ENCODE measurements at regions of chr20 and their contacts with region 1.

Region 1: DNA sequence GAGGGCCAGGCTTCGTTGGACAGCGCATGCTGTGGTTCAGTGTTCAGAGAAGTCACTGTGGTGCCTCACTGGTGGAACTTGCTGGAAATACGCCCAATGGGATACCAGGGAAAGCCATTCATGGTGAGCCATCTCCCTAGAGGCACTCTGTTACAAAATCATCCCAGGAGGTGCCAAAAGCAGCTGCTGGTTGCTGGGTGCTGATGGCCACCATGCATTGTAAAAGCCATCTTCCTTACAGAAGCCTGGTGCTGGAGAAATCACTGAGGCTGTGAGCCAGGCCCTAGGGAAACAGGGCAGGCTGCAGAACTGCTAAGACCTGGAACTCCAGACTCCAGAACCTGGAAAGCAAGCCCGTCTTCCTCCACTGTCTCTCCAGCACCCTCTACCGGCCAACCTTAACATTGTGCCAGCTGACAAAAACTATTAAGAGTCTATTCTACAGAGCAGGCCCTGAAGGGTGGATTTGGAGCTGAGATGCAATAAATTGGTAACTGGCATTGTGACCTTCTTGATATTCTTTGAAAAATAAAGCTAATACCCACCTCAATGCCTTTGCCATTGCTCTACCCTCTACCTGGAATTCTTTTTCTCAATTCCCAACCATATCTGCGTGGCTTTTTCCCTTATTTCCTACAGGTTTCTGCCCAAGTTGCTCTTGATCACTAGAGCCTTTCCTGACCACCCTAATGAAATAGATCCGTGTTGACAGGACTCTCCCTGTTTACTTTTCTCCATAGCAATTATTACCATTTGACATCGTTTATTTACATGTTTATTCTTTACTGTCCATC is 18.5 kb downstream of the SNRPB start:
- DNase-seq: peak; percentile 85
- ATAC-seq: peak; percentile 58
- H3K4me3 Mint-ChIP-seq: no peak overlapping the region
- H3K27ac Mint-ChIP-seq: no peak overlapping the region
- H3K4me1 Mint-ChIP-seq: peaks cover 45% of the 10 kb centered on the region
- H3K27me3 Mint-ChIP-seq: no peaks in the 10 kb centered on the region

Region 2: GRCh38 chr20:1965520-1966351 is 486.4 kb before region 1 on chr20:
- CTCF ChIA-PET with region 1: no interaction called
- POLR2A ChIA-PET with region 1: no interaction called
- intact Hi-C with region 1: loop called (anchors 1 to 5 kb)
- DNase-seq: peak; percentile 93
- ATAC-seq: peak; percentile 93
- H3K4me3 Mint-ChIP-seq: peak overlapping the region; percentile 34
- H3K27ac Mint-ChIP-seq: no peak overlapping the region
- H3K4me1 Mint-ChIP-seq: peaks cover 11% of the 10 kb centered on the region
- H3K27me3 Mint-ChIP-seq: peaks cover 20% of the 10 kb centered on the region

Region 3: GRCh38 chr20:2140561-2140960 is 311.6 kb before region 1 on chr20:
- CTCF ChIA-PET with region 1: no interaction called
- POLR2A ChIA-PET with region 1: no interaction called
- intact Hi-C with region 1: no loop called
- DNase-seq: no peak
- ATAC-seq: no peak
- H3K4me3 Mint-ChIP-seq: no peak overlapping the region
- H3K27ac Mint-ChIP-seq: no peak overlapping the region
- H3K4me1 Mint-ChIP-seq: peaks cover 4% of the 10 kb centered on the region
- H3K27me3 Mint-ChIP-seq: no peaks in the 10 kb centered on the region

Region 4: DNA sequence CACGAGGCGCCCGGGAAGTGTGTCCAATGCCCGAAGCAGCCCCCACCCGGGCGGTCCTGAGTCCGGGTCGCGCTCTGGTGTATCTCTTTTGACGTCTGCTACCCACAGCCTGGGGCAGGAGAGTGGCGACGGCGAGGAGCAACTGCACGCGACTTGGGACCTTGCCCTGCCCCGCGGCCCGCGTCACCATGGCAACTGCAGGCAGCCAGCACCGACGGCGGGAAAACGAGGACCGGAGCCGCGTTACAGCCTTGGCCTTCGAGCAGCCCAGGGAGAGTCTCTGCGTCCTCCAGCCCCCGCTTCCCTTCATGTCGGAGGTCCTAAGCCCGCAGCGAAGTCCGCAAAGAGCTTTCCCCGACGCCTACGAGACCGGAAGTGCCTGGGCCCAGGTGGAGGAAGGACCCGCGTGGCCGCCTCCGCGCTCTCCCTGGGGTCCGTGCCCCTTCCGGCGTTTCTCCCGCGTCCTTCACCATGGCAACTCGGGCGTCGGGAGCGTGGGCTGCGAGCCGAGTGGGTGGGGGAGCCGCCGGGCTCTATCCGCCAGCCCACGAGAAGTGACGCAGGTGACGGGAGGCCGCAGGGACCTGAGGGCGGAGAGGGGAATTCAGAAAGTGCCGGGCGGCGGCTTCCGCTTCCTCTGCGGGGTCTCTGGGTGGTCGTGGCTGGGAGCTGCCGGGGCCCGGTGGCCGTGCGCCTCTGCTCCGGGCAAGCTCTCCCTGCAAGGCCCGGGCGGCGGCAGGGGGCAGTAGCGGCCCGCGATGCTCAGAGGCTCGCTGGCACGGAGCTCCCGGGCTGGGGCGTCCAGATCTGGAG is 245.0 kb before region 1 on chr20:
- CTCF ChIA-PET with region 1: interaction called, 5 read pairs
- POLR2A ChIA-PET with region 1: no interaction called
- intact Hi-C with region 1: loop called (anchors 1 to 2 kb)
- DNase-seq: peak; percentile 85
- ATAC-seq: peak; percentile 77
- H3K4me3 Mint-ChIP-seq: peak overlapping the region; percentile 67
- H3K27ac Mint-ChIP-seq: peak overlapping the region; percentile 24
- H3K4me1 Mint-ChIP-seq: peaks cover 9% of the 10 kb centered on the region
- H3K27me3 Mint-ChIP-seq: no peaks in the 10 kb centered on the region

Region 5: DNA sequence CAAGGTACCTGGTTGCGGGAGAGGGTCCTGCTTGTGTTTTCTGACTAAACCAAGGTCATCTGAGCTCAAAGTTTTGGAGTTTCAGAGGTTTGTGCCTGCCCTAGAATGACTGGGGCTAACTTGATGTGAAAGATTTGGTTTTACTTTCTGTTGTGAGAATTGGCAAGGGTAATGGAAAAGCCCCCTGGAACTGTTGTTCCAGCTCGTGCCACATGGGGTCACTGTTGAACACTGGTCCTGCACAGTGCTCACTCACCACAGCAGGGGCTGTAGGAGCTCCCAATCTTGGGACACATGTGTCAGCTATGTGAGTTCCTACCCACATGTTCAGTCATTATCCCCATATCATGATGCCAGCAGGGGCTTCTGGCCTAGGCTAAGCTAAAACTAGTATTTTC is 65.0 kb before region 1 on chr20:
- CTCF ChIA-PET with region 1: interaction called, 29 read pairs
- POLR2A ChIA-PET with region 1: no interaction called
- intact Hi-C with region 1: loop called (anchors 1 to 5 kb)
- DNase-seq: peak; percentile 82
- ATAC-seq: peak; percentile 90
- H3K4me3 Mint-ChIP-seq: no peak overlapping the region
- H3K27ac Mint-ChIP-seq: no peak overlapping the region
- H3K4me1 Mint-ChIP-seq: peaks cover 3% of the 10 kb centered on the region
- H3K27me3 Mint-ChIP-seq: peaks cover 10% of the 10 kb centered on the region

Region 6: GRCh38 chr20:2470423-2471193 is 18.5 kb after region 1 on chr20 and contains the start of gene SNRPB:
- CTCF ChIA-PET with region 1: interaction called, 42 read pairs
- POLR2A ChIA-PET with region 1: interaction called, 7 read pairs
- intact Hi-C with region 1: no loop called
- DNase-seq: peak; percentile 98
- ATAC-seq: peak; percentile 99
- H3K4me3 Mint-ChIP-seq: peak within 1 kb of the TSS; percentile 96
- H3K27ac Mint-ChIP-seq: peak within 1 kb of the TSS; percentile 100
- H3K4me1 Mint-ChIP-seq: peaks cover 49% of the 10 kb centered on the region
- H3K27me3 Mint-ChIP-seq: no peaks in the 10 kb centered on the region
- total RNA-seq, gene SNRPB: 348 to 466 TPM

Region 7: GRCh38 chr20:2528671-2529271 is 76.6 kb after region 1 on chr20:
- CTCF ChIA-PET with region 1: no interaction called
- POLR2A ChIA-PET with region 1: no interaction called
- intact Hi-C with region 1: no loop called
- DNase-seq: no peak
- ATAC-seq: no peak
- H3K4me3 Mint-ChIP-seq: no peak overlapping the region
- H3K27ac Mint-ChIP-seq: no peak overlapping the region
- H3K4me1 Mint-ChIP-seq: peaks cover 15% of the 10 kb centered on the region
- H3K27me3 Mint-ChIP-seq: peaks cover 2% of the 10 kb centered on the region

Region 8: GRCh38 chr20:3067139-3068009 is 615.2 kb after region 1 on chr20:
- CTCF ChIA-PET with region 1: no interaction called
- POLR2A ChIA-PET with region 1: no interaction called
- intact Hi-C with region 1: no loop called
- DNase-seq: no peak
- ATAC-seq: no peak
- H3K4me3 Mint-ChIP-seq: no peak overlapping the region
- H3K27ac Mint-ChIP-seq: no peak overlapping the region
- H3K4me1 Mint-ChIP-seq: peaks cover 20% of the 10 kb centered on the region
- H3K27me3 Mint-ChIP-seq: no peaks in the 10 kb centered on the region

Measured in activated CD4-positive, alpha-beta T cell treated with anti-CD3 and anti-CD28 coated beads for 36 hours (primary cell).